T-cell (primary cell): ENCODE measurements at regions of chr5 and their contacts with region 1.

Region 1: DNA sequence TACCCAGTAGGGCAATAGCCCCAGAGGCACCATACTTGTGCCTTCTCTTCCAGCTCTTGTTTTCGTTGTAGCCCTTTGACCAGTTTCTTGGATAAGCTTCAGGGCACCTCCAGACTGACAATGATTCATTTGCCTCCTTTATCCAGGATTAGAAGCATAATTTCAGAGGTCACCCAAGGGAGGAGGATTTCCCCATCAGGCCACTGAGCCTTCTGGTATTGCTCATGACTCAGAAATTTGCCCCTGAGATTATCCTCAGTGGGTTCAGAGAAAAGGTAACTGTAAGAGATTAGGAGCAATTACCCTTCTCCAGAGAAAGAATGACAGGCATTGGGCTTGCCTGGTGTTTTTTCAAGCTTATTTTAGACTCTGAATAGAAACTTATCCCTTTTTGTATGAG is 147.9 kb downstream of the MSX2 start:
- DNase-seq: no peak
- ATAC-seq: no peak
- H3K4me3 ChIP-seq: no peak overlapping the region
- H3K4me3 Mint-ChIP-seq: no peak overlapping the region
- H3K27ac ChIP-seq: no peak overlapping the region
- H3K27ac Mint-ChIP-seq: no peak overlapping the region
- H3K4me1 ChIP-seq: no peaks in the 10 kb centered on the region
- H3K4me1 Mint-ChIP-seq: no peaks in the 10 kb centered on the region
- H3K27me3 ChIP-seq: peaks cover 0 to 5% of the 10 kb centered on the region in 2 experiments
- H3K27me3 Mint-ChIP-seq: peaks cover 15 to 28% of the 10 kb centered on the region in 2 donors

Region 2: GRCh38 chr5:174172152-174172551 is 700.1 kb before region 1 on chr5:
- CTCF ChIA-PET with region 1: no interaction called
- POLR2A ChIA-PET with region 1: no interaction called
- DNase-seq: no peak
- ATAC-seq: no peak
- H3K4me3 ChIP-seq: no peak overlapping the region
- H3K4me3 Mint-ChIP-seq: no peak overlapping the region
- H3K27ac ChIP-seq: no peak overlapping the region
- H3K27ac Mint-ChIP-seq: no peak overlapping the region
- H3K4me1 ChIP-seq: no peaks in the 10 kb centered on the region
- H3K4me1 Mint-ChIP-seq: no peaks in the 10 kb centered on the region
- H3K27me3 ChIP-seq: peaks cover 0 to 5% of the 10 kb centered on the region in 2 experiments
- H3K27me3 Mint-ChIP-seq: peaks cover 11 to 17% of the 10 kb centered on the region in 2 donors

Region 3: DNA sequence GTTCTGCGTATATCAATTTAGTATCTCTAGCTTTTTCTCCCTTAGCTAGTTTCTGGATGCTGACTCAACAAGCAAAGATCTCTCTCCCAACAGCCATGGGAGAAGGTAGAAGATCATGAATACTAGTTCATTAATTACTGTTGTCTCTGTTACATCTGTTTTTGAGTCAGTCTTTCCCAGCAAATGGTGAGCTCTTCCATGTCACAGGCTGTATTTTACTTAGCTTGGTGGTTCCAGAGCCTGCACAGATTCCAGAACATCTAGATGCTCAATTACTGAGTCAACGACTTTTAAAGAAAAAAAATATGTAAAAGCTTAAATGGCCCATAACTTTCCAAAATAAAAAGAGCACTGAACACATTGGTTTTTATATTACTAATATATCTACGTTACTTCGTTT is 519.6 kb before region 1 on chr5:
- CTCF ChIA-PET with region 1: no interaction called
- POLR2A ChIA-PET with region 1: interaction called in 1 of 2 experiments, 10 read pairs
- DNase-seq: no peak
- ATAC-seq: no peak
- H3K4me3 ChIP-seq: no peak overlapping the region
- H3K4me3 Mint-ChIP-seq: no peak overlapping the region
- H3K27ac ChIP-seq: no peak overlapping the region
- H3K27ac Mint-ChIP-seq: no peak overlapping the region
- H3K4me1 ChIP-seq: no peaks in the 10 kb centered on the region
- H3K4me1 Mint-ChIP-seq: no peaks in the 10 kb centered on the region
- H3K27me3 ChIP-seq: peaks cover 0 to 4% of the 10 kb centered on the region in 2 experiments
- H3K27me3 Mint-ChIP-seq: peaks cover 6 to 29% of the 10 kb centered on the region in 2 donors